ENCODE measurements at regions of chr4 and their contacts with region 1.

Region 1: GRCh38 chr4:122914292-122914904 is 8.0 kb downstream of the NUDT6 start:
- DNase-seq: peak in 1 of 2 experiments; percentile 4
- H3K4me3 ChIP-seq: no peak overlapping the region
- H3K4me3 Mint-ChIP-seq: no peak overlapping the region
- H3K27ac Mint-ChIP-seq: no peak overlapping the region
- H3K4me1 ChIP-seq: no peaks in the 10 kb centered on the region
- H3K4me1 Mint-ChIP-seq: no peaks in the 10 kb centered on the region
- H3K27me3 ChIP-seq: no peaks in the 10 kb centered on the region
- H3K27me3 Mint-ChIP-seq: no peaks in the 10 kb centered on the region
- CTCF ChIP-seq: no peak

Region 2: GRCh38 chr4:122854447-122855352 is 59.7 kb before region 1 on chr4:
- CTCF ChIA-PET with region 1: no interaction called
- POLR2A ChIA-PET with region 1: no interaction called
- intact Hi-C with region 1: loop called (anchors 5 kb)
- DNase-seq: peak in 1 of 2 experiments; percentile 3
- H3K4me3 ChIP-seq: no peak overlapping the region
- H3K4me3 Mint-ChIP-seq: no peak overlapping the region
- H3K27ac Mint-ChIP-seq: no peak overlapping the region
- H3K4me1 ChIP-seq: peaks cover 49% of the 10 kb centered on the region
- H3K4me1 Mint-ChIP-seq: no peaks in the 10 kb centered on the region
- H3K27me3 ChIP-seq: no peaks in the 10 kb centered on the region
- H3K27me3 Mint-ChIP-seq: no peaks in the 10 kb centered on the region
- CTCF ChIP-seq: no peak